Adrenal gland (tissue), 19 donors: ENCODE measurements at regions of chr12 and their contacts with region 1.

Region 1: GRCh38 chr12:79407671-79408622 is 282.8 kb downstream of the PAWR start:
- DNase-seq: peak; percentile 54 to 77 (median 68)
- H3K4me3 ChIP-seq: no peak overlapping the region
- H3K27ac ChIP-seq: no peak overlapping the region
- H3K4me1 ChIP-seq: peaks cover 0 to 17% of the 10 kb centered on the region in 2 donors
- H3K27me3 ChIP-seq: no peaks in the 10 kb centered on the region
- CTCF ChIP-seq: peak; percentile 34 to 78 (median 72)
- POLR2A ChIP-seq: no peak

Region 2: DNA sequence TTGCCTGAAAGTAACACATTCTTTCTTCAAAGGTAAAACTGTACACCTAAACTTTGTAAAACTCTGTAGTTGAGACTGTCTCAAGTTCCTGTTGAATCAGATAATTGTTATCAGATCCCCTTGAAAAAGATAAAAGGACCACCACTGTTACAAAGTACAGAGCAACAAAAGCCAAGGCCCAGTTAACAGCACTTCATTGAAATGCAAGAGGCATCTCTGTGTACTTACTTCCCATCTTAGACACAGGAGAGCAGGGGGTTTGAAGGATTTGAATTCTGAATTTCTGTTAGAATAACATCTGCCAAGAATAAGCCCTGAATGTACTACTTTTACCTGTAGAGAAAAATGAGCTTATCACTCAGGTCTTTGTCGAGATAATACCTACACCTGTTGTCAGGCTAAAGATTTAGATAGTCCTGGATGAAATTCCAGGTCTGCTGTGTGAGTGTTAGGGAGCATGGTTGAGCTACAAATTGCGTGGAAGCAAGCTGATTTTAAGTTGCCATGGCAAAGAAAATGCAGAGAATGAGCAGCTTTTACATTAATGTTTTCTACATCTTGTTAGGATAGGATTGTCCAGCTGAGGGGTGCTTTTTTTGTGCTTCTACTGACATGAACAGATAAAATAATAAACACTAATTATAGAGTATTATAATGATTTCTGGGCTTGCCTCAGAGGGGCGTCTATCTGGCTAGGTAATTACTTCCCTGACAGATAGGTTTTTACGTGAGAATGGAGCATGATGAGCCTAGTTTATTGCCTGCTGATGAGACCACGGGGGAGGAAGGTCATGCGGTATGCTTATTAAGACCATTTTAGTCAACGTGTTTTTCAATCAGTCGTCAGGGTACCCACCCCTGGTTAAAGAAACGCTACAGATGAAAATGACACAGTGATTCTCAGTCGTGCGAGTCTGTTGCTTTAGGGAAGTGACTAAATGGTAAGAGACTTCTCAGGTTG is 26.4 kb before region 1 on chr12:
- intact Hi-C with region 1: no loop called
- DNase-seq: no peak
- H3K4me3 ChIP-seq: no peak overlapping the region
- H3K27ac ChIP-seq: no peak overlapping the region
- H3K4me1 ChIP-seq: peaks cover 0 to 8% of the 10 kb centered on the region in 2 donors
- H3K27me3 ChIP-seq: no peaks in the 10 kb centered on the region
- CTCF ChIP-seq: no peak
- POLR2A ChIP-seq: no peak

Region 3: GRCh38 chr12:79624378-79624777 is 216.4 kb after region 1 on chr12:
- intact Hi-C with region 1: no loop called
- DNase-seq: no peak
- H3K4me3 ChIP-seq: no peak overlapping the region
- H3K27ac ChIP-seq: no peak overlapping the region
- H3K4me1 ChIP-seq: no peaks in the 10 kb centered on the region
- H3K27me3 ChIP-seq: no peaks in the 10 kb centered on the region
- CTCF ChIP-seq: no peak
- POLR2A ChIP-seq: no peak

Region 4: GRCh38 chr12:80269803-80270552 is 862.0 kb after region 1 on chr12:
- intact Hi-C with region 1: loop called in 1 of 2 experiments (anchors 10 kb)
- DNase-seq: peak in 1 of 7 donors; percentile 1
- H3K4me3 ChIP-seq: no peak overlapping the region
- H3K27ac ChIP-seq: no peak overlapping the region
- H3K4me1 ChIP-seq: no peaks in the 10 kb centered on the region
- H3K27me3 ChIP-seq: no peaks in the 10 kb centered on the region
- CTCF ChIP-seq: peak; percentile 29 to 68 (median 52)
- POLR2A ChIP-seq: no peak